ENCODE measurements at regions of chr11 and their contacts with region 1.

Region 1: DNA sequence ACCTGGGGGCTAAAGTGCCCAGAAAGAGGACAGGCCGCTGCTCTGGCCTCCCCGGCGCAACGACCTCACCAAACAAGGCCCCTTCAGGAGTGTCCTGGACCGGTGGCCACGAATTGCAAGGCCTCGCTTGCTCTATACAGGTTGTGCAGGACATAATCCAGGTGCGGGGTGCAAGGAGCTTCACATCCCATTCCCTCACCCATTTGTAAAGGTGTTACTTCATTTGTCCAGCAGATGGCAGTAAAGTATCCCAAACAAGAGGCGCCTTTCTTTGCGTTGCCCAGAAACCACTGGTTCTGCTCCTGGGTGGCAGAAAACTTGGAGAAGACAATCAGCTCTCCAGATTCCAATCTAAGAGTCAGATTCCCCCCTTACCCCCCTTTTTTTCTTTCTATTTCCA is 35.9 kb upstream of the PRDM11 start:
- DNase-seq: no peak
- ATAC-seq: peak; percentile 36 to 65

Region 2: DNA sequence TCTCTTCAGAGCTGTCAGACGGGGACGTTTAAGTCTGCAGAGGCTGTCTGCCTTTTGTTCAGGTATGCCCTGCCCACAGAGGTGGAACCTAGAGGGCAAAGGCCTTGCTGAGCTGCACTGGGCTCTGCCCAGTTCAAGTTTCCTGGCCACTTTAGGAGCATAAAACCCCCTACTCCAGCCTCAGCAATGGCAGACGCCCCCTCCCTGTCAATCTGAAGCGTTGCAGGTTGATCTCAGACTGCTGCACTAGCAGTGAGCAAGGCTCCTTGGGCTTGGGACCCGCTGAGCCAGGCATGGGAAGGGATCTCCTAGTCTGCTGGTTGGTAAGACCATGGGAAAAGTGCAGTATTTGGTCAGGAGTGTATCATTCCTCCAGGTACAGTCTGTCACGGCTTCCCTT is 93.2 kb before region 1 on chr11:
- intact Hi-C with region 1: no loop called
- DNase-seq: no peak
- ATAC-seq: no peak

Region 3: GRCh38 chr11:45252134-45252855 is 141.7 kb after region 1 on chr11:
- intact Hi-C with region 1: loop called in 1 of 2 experiments (anchors 10 kb)
- DNase-seq: peak; percentile 66
- ATAC-seq: peak; percentile 72 to 89

Region 4: DNA sequence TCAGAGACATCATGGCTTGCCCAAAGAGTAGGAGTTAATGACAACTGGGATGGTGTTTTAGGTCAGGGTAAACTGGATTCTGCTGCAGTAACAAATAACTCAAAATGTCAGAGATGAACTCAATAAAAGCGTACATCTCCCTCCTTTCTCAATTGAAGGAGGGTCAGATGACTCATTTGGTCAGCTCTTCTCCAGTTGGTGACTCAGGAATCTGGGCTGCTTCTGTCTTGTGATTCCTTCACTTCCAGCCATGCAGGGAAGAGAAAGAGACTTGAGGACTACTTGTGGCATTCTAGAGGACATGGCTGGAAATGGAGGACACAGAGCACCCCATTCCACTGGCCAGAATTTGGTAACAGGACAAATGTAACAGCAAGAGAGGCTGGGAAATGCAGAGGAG is 178.8 kb after region 1 on chr11:
- intact Hi-C with region 1: loop called in 1 of 2 experiments (anchors 2 kb)
- DNase-seq: no peak
- ATAC-seq: no peak

Region 5: DNA sequence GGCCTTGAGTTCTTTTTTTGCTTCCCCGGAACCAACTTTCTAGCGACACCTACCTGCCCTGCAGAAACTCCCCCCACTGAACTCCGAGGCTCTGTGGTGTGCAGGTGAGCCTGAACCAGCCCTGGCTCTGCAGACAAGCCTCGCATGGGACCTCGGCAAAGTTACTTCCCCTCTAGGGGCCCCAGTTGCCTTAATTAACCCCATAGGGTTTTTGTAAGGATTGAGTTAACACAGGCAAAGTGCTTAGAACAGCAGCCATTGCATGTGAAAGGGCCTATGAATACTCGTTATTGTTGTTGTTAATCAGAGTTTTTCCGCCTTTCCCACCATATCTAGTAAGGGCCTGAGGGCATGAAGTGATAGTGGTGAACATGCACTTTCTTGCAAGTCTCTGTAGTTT is 188.2 kb after region 1 on chr11:
- intact Hi-C with region 1: loop called (anchors 2 to 5 kb)
- DNase-seq: no peak
- ATAC-seq: no peak

Region 6: DNA sequence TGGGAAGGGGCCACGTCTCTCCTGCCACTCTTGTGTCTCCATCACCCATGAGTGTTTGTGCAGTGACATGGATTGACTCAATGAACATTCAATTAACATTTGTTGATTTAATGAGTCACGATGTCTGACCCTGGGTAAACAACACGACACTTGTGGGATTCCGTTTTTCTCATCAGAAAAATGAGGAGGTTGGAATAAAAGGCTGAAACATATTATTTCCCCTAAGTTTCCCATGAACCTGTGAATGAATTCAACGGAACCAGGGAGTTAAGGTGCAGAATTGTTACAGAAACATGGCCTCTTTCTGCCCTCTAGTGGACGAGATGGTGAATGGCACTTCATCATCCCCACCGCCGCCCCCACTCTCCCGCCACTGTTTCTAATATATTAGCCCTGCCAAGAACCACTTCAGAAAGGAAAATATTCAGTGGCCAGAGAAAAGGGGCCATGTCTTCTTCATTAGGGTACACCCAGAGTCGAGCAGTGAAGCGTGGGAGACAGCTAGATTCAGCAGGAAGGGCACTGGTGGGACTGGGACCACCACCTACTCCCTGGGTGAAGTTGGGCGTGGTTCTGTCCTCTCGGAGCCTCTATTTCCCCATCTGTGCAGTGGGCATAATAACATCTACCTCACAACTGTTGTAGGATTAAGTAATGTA is 221.8 kb after region 1 on chr11:
- intact Hi-C with region 1: loop called (anchors 1 to 5 kb)
- DNase-seq: no peak
- ATAC-seq: peak; percentile 75 to 76

Measured in left cardiac atrium (tissue), 4 donors.